Ascending aorta (tissue), 2 donors: ENCODE measurements at regions of chr1 and their contacts with region 1.

Region 1: GRCh38 chr1:179002552-179003345 is 22.9 kb upstream of the FAM20B start:
- DNase-seq: peak in 1 of 2 donors; percentile 86
- H3K4me3 ChIP-seq: no peak overlapping the region
- H3K27ac ChIP-seq: no peak overlapping the region
- H3K4me1 ChIP-seq: no peaks in the 10 kb centered on the region
- H3K27me3 ChIP-seq: no peaks in the 10 kb centered on the region
- CTCF ChIP-seq: peak; percentile 88 to 99 (median 98)

Region 2: GRCh38 chr1:178542560-178543356 is 460.0 kb before region 1 on chr1:
- intact Hi-C with region 1: loop called (anchors 5 kb)
- DNase-seq: peak; percentile 39 to 95
- H3K4me3 ChIP-seq: peak overlapping the region; percentile 92 to 96
- H3K27ac ChIP-seq: peak overlapping the region; percentile 69 to 72
- H3K4me1 ChIP-seq: peaks cover 0 to 6% of the 10 kb centered on the region in 2 donors
- H3K27me3 ChIP-seq: no peaks in the 10 kb centered on the region
- CTCF ChIP-seq: peak; percentile 90 to 99 (median 98)

Region 3: DNA sequence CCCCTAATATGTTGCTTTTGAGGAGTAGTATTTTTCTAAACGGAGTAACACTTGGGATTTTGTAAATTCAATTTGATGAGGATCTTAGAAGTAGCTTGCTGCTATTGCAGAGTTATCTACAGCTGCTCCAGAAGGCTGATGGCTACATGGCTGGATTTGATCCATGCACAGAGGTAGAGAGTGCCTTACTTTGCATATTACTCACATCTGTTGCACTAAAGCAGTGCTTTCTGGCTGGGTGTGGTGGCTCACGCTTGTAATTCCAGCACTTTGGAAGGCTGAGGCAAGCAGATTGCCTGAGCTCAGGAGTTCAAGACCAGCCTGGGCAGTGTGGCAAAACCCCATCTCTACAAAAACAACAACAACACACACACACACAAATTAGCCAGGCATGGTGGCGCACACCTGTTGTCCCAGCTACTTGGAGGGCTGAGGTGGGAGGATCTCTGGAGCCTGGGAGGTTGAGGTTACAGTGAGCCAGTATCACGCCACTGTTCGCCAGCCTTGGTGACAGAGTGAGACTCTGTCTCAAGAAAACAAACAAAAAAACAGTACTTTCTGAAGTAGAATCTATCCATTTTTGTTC is 253.1 kb before region 1 on chr1:
- intact Hi-C with region 1: no loop called
- DNase-seq: no peak
- H3K4me3 ChIP-seq: no peak overlapping the region
- H3K27ac ChIP-seq: no peak overlapping the region
- H3K4me1 ChIP-seq: no peaks in the 10 kb centered on the region
- H3K27me3 ChIP-seq: no peaks in the 10 kb centered on the region
- CTCF ChIP-seq: no peak

Region 4: DNA sequence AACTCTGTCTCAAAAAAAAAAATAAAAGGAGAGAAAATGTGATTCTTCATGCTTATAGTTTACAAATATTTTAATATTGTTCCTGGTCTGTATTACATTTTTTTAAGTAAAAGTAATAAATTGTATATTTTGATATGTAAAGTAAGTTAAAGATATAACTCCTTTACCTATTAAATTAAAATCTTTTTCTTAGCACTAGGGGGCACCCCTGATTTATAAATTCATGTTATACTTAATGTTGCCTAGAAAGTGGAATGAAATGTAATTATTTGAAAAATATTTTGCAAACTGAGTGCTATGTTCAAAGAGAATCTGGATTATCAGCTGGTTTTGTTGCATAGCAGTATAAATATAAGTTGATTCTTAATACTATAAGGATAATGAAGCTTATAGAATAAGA is 228.5 kb before region 1 on chr1:
- intact Hi-C with region 1: loop called (anchors 2 kb)
- DNase-seq: no peak
- H3K4me3 ChIP-seq: no peak overlapping the region
- H3K27ac ChIP-seq: no peak overlapping the region
- H3K4me1 ChIP-seq: no peaks in the 10 kb centered on the region
- H3K27me3 ChIP-seq: no peaks in the 10 kb centered on the region
- CTCF ChIP-seq: peak in 2 of 3 experiments; percentile 33 to 42

Region 5: GRCh38 chr1:178808529-178808928 is 194.2 kb before region 1 on chr1:
- intact Hi-C with region 1: loop called (anchors 1 kb)
- DNase-seq: no peak
- H3K4me3 ChIP-seq: no peak overlapping the region
- H3K27ac ChIP-seq: no peak overlapping the region
- H3K4me1 ChIP-seq: no peaks in the 10 kb centered on the region
- H3K27me3 ChIP-seq: no peaks in the 10 kb centered on the region
- CTCF ChIP-seq: no peak

Region 6: DNA sequence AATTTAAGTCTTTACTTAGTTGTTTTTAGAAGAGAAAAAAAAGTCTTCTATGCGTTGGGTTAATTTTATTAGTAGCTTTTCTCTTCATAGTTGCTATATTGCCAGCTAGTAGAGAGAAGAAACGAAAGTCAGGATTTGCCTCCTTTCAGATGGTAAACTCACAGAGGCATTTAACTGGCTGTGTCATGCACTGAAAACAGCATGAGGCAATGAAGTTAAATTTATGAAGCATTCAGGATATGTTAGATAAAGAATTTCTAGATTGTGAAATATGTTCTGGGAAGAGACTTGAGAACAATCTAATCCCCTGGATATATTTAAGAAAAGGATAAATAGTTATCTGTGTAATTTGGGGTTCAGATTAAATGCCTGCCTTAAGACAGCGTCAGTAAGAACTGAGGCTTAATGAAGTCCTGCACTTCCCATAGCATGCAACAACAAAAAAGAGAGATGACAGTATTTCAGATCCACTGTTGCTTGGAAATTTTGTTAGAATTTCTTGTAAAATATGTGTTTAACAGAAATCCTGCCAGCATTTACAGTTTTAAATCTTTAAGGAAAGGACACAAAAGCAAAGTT is 133.5 kb before region 1 on chr1:
- intact Hi-C with region 1: loop called (anchors 5 kb)
- DNase-seq: no peak
- H3K4me3 ChIP-seq: peak overlapping the region; percentile 41 to 60
- H3K27ac ChIP-seq: peak overlapping the region in 1 of 2 donors; percentile 53
- H3K4me1 ChIP-seq: peaks cover 0 to 2% of the 10 kb centered on the region in 2 donors
- H3K27me3 ChIP-seq: no peaks in the 10 kb centered on the region
- CTCF ChIP-seq: no peak

Region 7: GRCh38 chr1:178931858-178932551 is 70.7 kb before region 1 on chr1:
- intact Hi-C with region 1: loop called (anchors 5 kb)
- DNase-seq: peak in 1 of 2 donors; percentile 93
- H3K4me3 ChIP-seq: no peak overlapping the region
- H3K27ac ChIP-seq: peak overlapping the region; percentile 84 to 86
- H3K4me1 ChIP-seq: peaks cover 22 to 33% of the 10 kb centered on the region in 2 donors
- H3K27me3 ChIP-seq: no peaks in the 10 kb centered on the region
- CTCF ChIP-seq: no peak